ENCODE measurements at regions of chr1 and their contacts with region 1.

Region 1: GRCh38 chr1:19010995-19011844 is 54.7 kb upstream of the IFFO2 start:
- DNase-seq: peak in 8 of 9 donors; percentile 10 to 73 (median 53)
- ATAC-seq: peak; percentile 87
- H3K4me3 ChIP-seq: peak overlapping the region; percentile 19
- H3K4me3 Mint-ChIP-seq: peak overlapping the region in 9 of 10 donors; percentile 34 to 72 (median 59)
- H3K27ac ChIP-seq: peak overlapping the region; percentile 14
- H3K27ac Mint-ChIP-seq: peak overlapping the region in 8 of 9 donors; percentile 40 to 81 (median 72)
- H3K4me1 ChIP-seq: peaks cover 8 to 13% of the 10 kb centered on the region in 2 donors
- H3K4me1 Mint-ChIP-seq: peaks cover 15 to 33% (median 29%) of the 10 kb centered on the region in 7 donors
- H3K27me3 ChIP-seq: no peaks in the 10 kb centered on the region
- H3K27me3 Mint-ChIP-seq: peaks cover 0 to 5% (median 0%) of the 10 kb centered on the region in 5 donors

Region 2: GRCh38 chr1:17119076-17119772 is 1892.0 kb before region 1 on chr1 and contains the start of gene PADI2:
- CTCF ChIA-PET with region 1: no interaction called
- POLR2A ChIA-PET with region 1: no interaction called
- intact Hi-C with region 1: no loop called
- DNase-seq: peak; percentile 3 to 51 (median 42)
- ATAC-seq: peak; percentile 93
- H3K4me3 ChIP-seq: no peak within 1 kb of the TSS
- H3K4me3 Mint-ChIP-seq: peak within 1 kb of the TSS in 9 of 10 donors; percentile 12 to 75 (median 48)
- H3K27ac ChIP-seq: no peak within 1 kb of the TSS
- H3K27ac Mint-ChIP-seq: no peak within 1 kb of the TSS
- H3K4me1 ChIP-seq: peaks cover 0 to 7% of the 10 kb centered on the region in 2 donors
- H3K4me1 Mint-ChIP-seq: peaks cover 0 to 23% (median 5%) of the 10 kb centered on the region in 7 donors
- H3K27me3 ChIP-seq: no peaks in the 10 kb centered on the region
- H3K27me3 Mint-ChIP-seq: peaks cover 25 to 51% (median 38%) of the 10 kb centered on the region in 5 donors
- total RNA-seq, gene PADI2: 0.08 to 11.2 (median 0.12) TPM

Region 3: DNA sequence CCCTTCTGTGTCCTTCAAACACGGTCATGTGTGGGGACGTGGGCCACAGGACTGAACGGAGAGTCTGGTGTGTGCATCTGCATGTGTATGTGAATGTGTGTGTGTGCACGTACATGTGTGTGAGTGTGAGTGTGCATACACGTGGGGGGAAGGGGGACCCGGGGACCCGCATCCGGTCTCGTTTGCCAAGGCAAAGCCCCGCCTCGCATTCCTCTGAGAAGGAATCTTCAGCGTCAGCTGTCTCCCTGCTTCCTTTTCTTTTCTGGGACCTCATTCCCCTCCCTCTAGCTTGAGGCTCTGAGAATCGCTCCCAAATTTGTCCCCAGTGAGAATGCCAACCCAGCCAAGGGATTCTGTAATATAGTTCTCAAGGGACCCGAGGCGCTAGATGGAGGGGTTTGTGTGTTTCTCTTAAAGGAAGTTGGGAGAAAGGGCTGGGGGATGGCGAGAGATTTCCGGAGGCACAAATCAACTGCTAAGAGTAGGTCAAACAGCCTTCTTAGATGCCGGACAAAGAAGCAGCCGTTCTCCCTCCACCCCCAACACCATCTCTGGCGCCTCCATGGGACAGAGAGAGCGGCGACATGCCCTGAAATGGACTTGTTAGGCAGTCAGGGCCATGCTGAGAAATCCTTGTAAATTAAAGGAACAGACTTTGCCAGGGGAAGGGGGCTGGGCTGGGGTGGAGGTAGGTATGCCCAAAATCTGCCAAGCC is 61.4 kb before region 1 on chr1:
- CTCF ChIA-PET with region 1: no interaction called
- POLR2A ChIA-PET with region 1: no interaction called
- intact Hi-C with region 1: loop called in 1 of 2 experiments (anchors 1 kb)
- DNase-seq: peak in 3 of 9 donors; percentile 19 to 35 (median 32)
- ATAC-seq: no peak
- H3K4me3 ChIP-seq: peak overlapping the region; percentile 50
- H3K4me3 Mint-ChIP-seq: peak overlapping the region; percentile 82 to 94 (median 90)
- H3K27ac ChIP-seq: peak overlapping the region; percentile 98
- H3K27ac Mint-ChIP-seq: peak overlapping the region; percentile 91 to 99 (median 98)
- H3K4me1 ChIP-seq: peaks cover 95 to 99% of the 10 kb centered on the region in 2 donors
- H3K4me1 Mint-ChIP-seq: peaks cover 83 to 98% (median 93%) of the 10 kb centered on the region in 7 donors
- H3K27me3 ChIP-seq: no peaks in the 10 kb centered on the region
- H3K27me3 Mint-ChIP-seq: peaks cover 0 to 2% (median 0%) of the 10 kb centered on the region in 5 donors

Region 4: GRCh38 chr1:19074902-19075721 is 63.9 kb after region 1 on chr1:
- CTCF ChIA-PET with region 1: interaction called, 3 read pairs
- POLR2A ChIA-PET with region 1: interaction called, 9 read pairs
- intact Hi-C with region 1: loop called (anchors 1 kb)
- DNase-seq: peak in 1 of 9 donors; percentile 10
- ATAC-seq: peak; percentile 19
- H3K4me3 ChIP-seq: peak overlapping the region; percentile 41
- H3K4me3 Mint-ChIP-seq: peak overlapping the region; percentile 45 to 82 (median 72)
- H3K27ac ChIP-seq: peak overlapping the region; percentile 18
- H3K27ac Mint-ChIP-seq: peak overlapping the region; percentile 32 to 93 (median 76)
- H3K4me1 ChIP-seq: peaks cover 32 to 52% of the 10 kb centered on the region in 2 donors
- H3K4me1 Mint-ChIP-seq: peaks cover 30 to 69% (median 60%) of the 10 kb centered on the region in 7 donors
- H3K27me3 ChIP-seq: no peaks in the 10 kb centered on the region
- H3K27me3 Mint-ChIP-seq: no peaks in the 10 kb centered on the region

Region 5: GRCh38 chr1:19096036-19096833 is 85.0 kb after region 1 on chr1:
- CTCF ChIA-PET with region 1: no interaction called
- POLR2A ChIA-PET with region 1: interaction called, 4 read pairs
- intact Hi-C with region 1: loop called in 1 of 2 experiments (anchors 5 kb)
- DNase-seq: peak in 5 of 9 donors; percentile 13 to 28 (median 24)
- ATAC-seq: no peak
- H3K4me3 ChIP-seq: no peak overlapping the region
- H3K4me3 Mint-ChIP-seq: no peak overlapping the region
- H3K27ac ChIP-seq: no peak overlapping the region
- H3K27ac Mint-ChIP-seq: peak overlapping the region in 2 of 9 donors; percentile 1 to 32
- H3K4me1 ChIP-seq: no peaks in the 10 kb centered on the region
- H3K4me1 Mint-ChIP-seq: peaks cover 0 to 7% (median 0%) of the 10 kb centered on the region in 7 donors
- H3K27me3 ChIP-seq: no peaks in the 10 kb centered on the region
- H3K27me3 Mint-ChIP-seq: no peaks in the 10 kb centered on the region

Measured in naive thymus-derived CD4-positive, alpha-beta T cell (primary cell).